ENCODE measurements at regions of chr15 and their contacts with region 1.

Region 1: DNA sequence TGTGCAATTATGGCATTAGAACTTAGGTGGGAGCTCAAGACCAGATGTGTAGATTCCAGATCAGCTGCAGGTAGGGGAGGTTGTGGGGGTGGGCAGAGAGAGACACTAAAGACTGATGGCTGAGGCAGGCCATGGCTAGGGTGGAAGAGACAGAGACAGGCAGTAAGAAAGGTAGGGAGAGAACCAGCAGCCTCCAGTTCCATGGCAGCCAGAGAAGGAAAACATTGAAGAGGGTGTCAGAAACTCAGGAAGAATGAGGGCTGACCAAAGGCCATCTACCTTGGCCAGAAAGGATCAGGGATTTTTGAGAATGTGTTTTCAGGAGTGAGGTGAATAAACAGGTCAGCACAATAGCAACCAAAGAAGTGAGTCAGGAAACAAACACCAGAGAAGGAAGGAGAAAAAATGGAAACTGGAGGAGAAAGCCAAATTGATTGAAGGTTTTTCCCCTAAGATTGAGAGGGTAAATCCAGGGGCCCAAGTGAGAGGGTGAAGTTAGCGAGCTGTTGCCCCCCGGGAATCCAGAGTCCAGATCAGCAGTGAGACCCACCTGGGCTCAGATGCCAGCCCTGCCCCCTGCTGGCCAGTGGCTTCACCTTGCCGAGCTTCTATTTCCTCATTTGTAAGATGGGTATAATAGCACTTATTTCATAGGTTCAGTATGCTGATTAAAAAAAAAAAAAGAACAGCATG is 41.0 kb downstream of the ABHD2 start:
- DNase-seq: peak; percentile 63 to 68
- ATAC-seq: peak; percentile 60 to 79; a peak in 3 of 6 replicates
- H3K4me3 ChIP-seq: no peak overlapping the region
- H3K27ac ChIP-seq: peak overlapping the region; percentile 69 to 74
- H3K4me1 ChIP-seq: peaks cover 57% of the 10 kb centered on the region
- CTCF ChIP-seq: peak; percentile 95
- EP300 ChIP-seq: no peak
- POLR2A ChIP-seq: no peak
- RAD21 ChIP-seq: peak; percentile 84 to 86

Region 2: DNA sequence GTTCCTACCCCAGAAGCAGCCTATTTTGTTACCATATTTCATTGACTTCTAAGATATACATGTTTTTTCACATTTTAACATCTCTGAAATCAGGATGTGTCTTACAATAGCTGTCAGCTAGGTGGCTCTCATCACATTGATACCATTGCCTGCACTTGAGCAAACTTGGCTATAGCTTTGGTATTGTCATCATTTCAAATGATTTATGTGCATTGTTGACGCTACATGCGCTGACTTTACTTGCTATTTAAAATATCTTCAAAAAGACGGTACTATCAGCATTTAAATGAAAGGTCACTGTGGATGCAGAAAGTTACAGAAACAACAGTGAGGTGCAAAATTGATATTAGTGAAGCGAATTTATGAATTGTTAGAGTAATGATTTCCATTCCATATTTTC is 95.0 kb before region 1 on chr15:
- CTCF ChIA-PET with region 1: interaction called, 10 read pairs
- POLR2A ChIA-PET with region 1: no interaction called
- DNase-seq: peak; percentile 54 to 62
- ATAC-seq: peak; percentile 56 to 76; a peak in 5 of 6 replicates
- H3K4me3 ChIP-seq: no peak overlapping the region
- H3K27ac ChIP-seq: no peak overlapping the region
- H3K4me1 ChIP-seq: no peaks in the 10 kb centered on the region
- CTCF ChIP-seq: peak; percentile 62
- EP300 ChIP-seq: no peak
- POLR2A ChIP-seq: no peak
- RAD21 ChIP-seq: peak; percentile 63 to 78

Region 3: GRCh38 chr15:89075846-89076245 is 53.4 kb before region 1 on chr15:
- CTCF ChIA-PET with region 1: interaction called, 14 read pairs
- POLR2A ChIA-PET with region 1: no interaction called
- DNase-seq: no peak
- ATAC-seq: no peak
- H3K4me3 ChIP-seq: no peak overlapping the region
- H3K27ac ChIP-seq: no peak overlapping the region
- H3K4me1 ChIP-seq: 0 out of 3 replicates have a peak, but pooled peaks cover 3% of the 10 kb centered on the region
- CTCF ChIP-seq: no peak
- EP300 ChIP-seq: no peak
- POLR2A ChIP-seq: no peak
- RAD21 ChIP-seq: no peak

Region 4: DNA sequence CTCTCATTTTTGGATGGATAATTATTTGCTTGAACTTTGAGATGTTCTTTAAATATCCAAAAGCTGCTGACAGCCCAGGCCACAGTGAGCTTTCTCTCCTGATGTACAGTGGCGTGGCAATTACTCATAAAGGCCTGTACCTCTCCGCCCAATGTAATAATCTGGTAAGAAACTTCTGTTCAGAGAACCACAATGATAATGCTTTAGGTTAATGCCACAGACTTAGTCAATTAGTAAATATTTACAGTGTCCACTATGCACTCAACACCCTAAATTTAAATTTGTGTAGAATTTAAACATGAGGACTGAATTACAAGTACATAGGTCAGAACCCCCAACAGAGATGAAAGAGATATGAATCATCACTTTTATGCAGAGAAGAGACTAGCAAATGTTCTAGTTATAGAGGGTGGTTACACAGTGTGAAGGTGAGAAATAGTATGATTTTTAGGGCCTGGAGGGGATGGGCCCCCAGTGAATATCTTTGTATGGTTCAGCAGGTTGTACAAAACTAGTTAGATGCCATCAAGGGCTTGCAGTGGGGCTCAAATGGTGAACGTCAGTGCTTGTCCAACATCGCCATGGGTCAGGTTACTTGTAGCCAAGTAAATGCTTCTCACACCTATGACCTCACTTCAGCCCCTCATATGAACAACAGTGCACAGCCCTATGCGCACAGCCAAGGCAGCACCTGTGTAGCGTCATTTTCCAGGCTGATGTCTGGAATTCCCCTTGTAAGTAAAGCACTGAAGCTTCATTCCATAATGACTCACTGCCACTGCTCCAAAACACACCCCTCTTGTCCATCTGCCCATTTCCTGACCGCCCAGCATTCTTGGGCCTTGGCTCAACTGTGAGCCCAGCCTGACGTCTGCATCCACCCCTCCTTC is 27.7 kb before region 1 on chr15:
- CTCF ChIA-PET with region 1: interaction called, 187 read pairs
- POLR2A ChIA-PET with region 1: no interaction called
- DNase-seq: peak; percentile 97 to 98
- ATAC-seq: peak; percentile 92 to 93
- H3K4me3 ChIP-seq: no peak overlapping the region; the same call in 2 of the 3 replicates
- H3K27ac ChIP-seq: peak overlapping the region; percentile 85 to 88
- H3K4me1 ChIP-seq: peaks cover 99% of the 10 kb centered on the region
- CTCF ChIP-seq: no peak
- EP300 ChIP-seq: peak; percentile 69 to 71; a peak in 2 of 5 replicates
- POLR2A ChIP-seq: no peak
- RAD21 ChIP-seq: peak; percentile 8 to 24; a peak in 1 of 5 replicates

Region 5: DNA sequence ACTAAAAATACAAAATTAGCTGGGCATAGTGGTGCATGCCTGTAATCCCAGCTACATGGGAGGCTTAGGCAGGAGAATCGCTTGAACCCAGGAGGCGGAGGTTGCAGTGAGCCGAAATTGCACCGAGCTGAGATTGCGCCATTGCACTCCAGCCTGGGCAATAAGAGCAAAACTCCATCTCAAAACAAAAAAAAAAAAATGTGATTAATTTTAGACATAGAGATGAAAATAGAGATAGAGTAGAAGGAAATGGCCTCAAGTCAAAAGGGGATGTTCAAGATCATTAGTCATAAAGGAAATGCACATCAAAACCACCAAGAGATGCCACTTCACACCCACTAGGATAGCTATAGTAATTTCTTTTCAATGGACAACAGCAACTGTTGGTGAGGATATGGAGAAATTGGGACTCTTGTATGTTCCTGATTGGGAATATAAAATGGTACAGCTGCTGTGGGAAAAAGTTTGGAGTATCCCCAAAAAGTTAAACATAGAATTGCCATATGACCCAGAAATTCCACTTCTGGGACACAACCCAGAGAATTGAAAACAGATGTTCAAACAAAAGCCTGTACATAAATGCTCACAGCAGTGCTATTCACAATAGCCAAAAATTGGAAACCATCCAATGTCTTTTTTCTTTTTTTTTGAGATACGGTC is 14.4 kb after region 1 on chr15:
- CTCF ChIA-PET with region 1: interaction called, 29 read pairs
- POLR2A ChIA-PET with region 1: no interaction called
- DNase-seq: no peak
- ATAC-seq: no peak
- H3K4me3 ChIP-seq: no peak overlapping the region
- H3K27ac ChIP-seq: no peak overlapping the region
- H3K4me1 ChIP-seq: peaks cover 36% of the 10 kb centered on the region
- CTCF ChIP-seq: no peak
- EP300 ChIP-seq: no peak
- POLR2A ChIP-seq: no peak
- RAD21 ChIP-seq: no peak

Region 6: DNA sequence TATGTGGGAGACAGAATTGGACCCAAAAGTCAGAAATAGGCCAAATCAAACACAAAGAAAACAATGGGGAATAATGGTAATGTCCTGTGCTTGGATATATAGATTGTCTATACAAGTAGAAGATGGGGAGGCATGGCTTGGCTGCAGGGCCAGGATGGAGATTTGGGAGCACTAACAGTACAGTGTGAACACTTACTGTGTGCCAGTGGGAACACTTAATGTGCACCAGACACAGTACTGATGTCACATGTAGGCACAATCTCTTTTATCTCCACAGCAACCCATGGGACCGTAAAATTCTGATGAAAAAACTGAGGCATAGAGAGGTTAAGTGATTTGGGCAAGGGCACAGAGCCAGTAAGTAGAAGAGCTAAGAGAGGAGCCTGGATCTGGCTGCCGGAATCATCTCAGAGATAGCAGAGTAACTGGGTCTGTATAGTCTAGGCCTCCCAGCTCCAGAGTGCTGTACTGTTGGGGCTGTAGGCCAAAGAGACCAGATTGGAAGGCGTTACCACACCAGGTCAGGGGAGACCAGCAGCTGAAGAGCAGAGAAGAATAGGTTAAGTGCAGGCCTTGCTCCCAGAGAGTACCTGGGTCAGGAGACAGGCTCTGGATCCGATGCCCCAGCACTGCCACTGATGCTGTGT is 28.8 kb after region 1 on chr15:
- CTCF ChIA-PET with region 1: interaction called, 17 read pairs
- POLR2A ChIA-PET with region 1: no interaction called
- DNase-seq: no peak
- ATAC-seq: no peak; a peak in 1 of 6 replicates
- H3K4me3 ChIP-seq: no peak overlapping the region
- H3K27ac ChIP-seq: no peak overlapping the region
- H3K4me1 ChIP-seq: no peaks in the 10 kb centered on the region
- CTCF ChIP-seq: no peak
- EP300 ChIP-seq: no peak
- POLR2A ChIP-seq: no peak
- RAD21 ChIP-seq: no peak

Region 7: GRCh38 chr15:89378296-89379151 is 249.3 kb after region 1 on chr15:
- CTCF ChIA-PET with region 1: no interaction called
- POLR2A ChIA-PET with region 1: no interaction called
- DNase-seq: no peak
- ATAC-seq: no peak
- H3K4me3 ChIP-seq: no peak overlapping the region
- H3K27ac ChIP-seq: no peak overlapping the region
- H3K4me1 ChIP-seq: peaks cover 3% of the 10 kb centered on the region; the same call in 2 of the 3 replicates
- CTCF ChIP-seq: no peak
- EP300 ChIP-seq: no peak
- POLR2A ChIP-seq: no peak
- RAD21 ChIP-seq: no peak